ENCODE measurements at regions of chrX and their contacts with region 1.

Region 1: GRCh38 chrX:38275615-38276014 is 51.7 kb downstream of the RPGR start:
- DNase-seq: peak; percentile 66 to 89 (median 81)
- H3K4me3 ChIP-seq: no peak overlapping the region
- H3K4me3 Mint-ChIP-seq: no peak overlapping the region
- H3K27ac ChIP-seq: peak overlapping the region in 1 of 2 donors; percentile 42
- H3K27ac Mint-ChIP-seq: peak overlapping the region; percentile 69 to 92 (median 83)
- H3K4me1 ChIP-seq: peaks cover 8 to 18% of the 10 kb centered on the region in 2 donors
- H3K4me1 Mint-ChIP-seq: peaks cover 21% of the 10 kb centered on the region
- H3K27me3 ChIP-seq: no peaks in the 10 kb centered on the region
- H3K27me3 Mint-ChIP-seq: peaks cover 0 to 3% (median 0%) of the 10 kb centered on the region in 3 donors
- CTCF ChIP-seq: no peak

Region 2: DNA sequence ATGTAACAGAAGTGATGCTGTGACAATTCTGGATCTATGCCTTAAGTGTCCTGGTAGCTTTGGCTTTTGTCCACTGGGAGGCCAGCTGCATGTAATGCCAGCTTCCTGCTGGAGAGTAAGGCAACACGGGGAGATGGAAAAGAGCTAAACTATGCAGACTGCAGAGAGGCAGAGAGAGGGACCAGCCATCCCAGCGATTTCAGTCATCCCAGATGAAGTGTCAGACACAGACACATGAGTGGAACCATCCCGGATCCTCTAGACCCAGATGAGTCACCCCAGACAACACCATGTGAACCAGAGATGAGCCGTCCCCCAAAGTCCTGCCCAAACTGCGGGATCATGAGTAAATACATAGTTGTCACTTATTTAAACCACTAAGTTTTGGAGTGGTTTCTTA is 69.6 kb before region 1 on chrX:
- intact Hi-C with region 1: no loop called
- DNase-seq: no peak
- H3K4me3 ChIP-seq: no peak overlapping the region
- H3K4me3 Mint-ChIP-seq: no peak overlapping the region
- H3K27ac ChIP-seq: no peak overlapping the region
- H3K27ac Mint-ChIP-seq: no peak overlapping the region
- H3K4me1 ChIP-seq: no peaks in the 10 kb centered on the region
- H3K4me1 Mint-ChIP-seq: peaks cover 6% of the 10 kb centered on the region
- H3K27me3 ChIP-seq: no peaks in the 10 kb centered on the region
- H3K27me3 Mint-ChIP-seq: peaks cover 0 to 4% (median 1%) of the 10 kb centered on the region in 3 donors
- CTCF ChIP-seq: no peak

Region 3: GRCh38 chrX:38327007-38327774 is 51.6 kb after region 1 on chrX and contains the start of gene RPGR:
- intact Hi-C with region 1: loop called in 1 of 2 experiments (anchors 10 kb)
- DNase-seq: peak; percentile 88 to 95 (median 93)
- H3K4me3 ChIP-seq: peak within 1 kb of the TSS; percentile 51 to 80 (median 74)
- H3K4me3 Mint-ChIP-seq: peak within 1 kb of the TSS; percentile 86 to 91
- H3K27ac ChIP-seq: peak within 1 kb of the TSS; percentile 81 to 95
- H3K27ac Mint-ChIP-seq: peak within 1 kb of the TSS; percentile 92 to 97 (median 96)
- H3K4me1 ChIP-seq: peaks cover 7 to 13% of the 10 kb centered on the region in 2 donors
- H3K4me1 Mint-ChIP-seq: peaks cover 12% of the 10 kb centered on the region
- H3K27me3 ChIP-seq: no peaks in the 10 kb centered on the region
- H3K27me3 Mint-ChIP-seq: peaks cover 0 to 6% (median 1%) of the 10 kb centered on the region in 3 donors
- CTCF ChIP-seq: peak; percentile 78
- polyA plus RNA-seq, gene RPGR: 4.3 to 10.9 (median 5.1) TPM

Measured in CD14-positive monocyte (primary cell).